Mammary epithelial cell (primary cell): ENCODE measurements at regions of chrX and their contacts with region 1.

Region 1: DNA sequence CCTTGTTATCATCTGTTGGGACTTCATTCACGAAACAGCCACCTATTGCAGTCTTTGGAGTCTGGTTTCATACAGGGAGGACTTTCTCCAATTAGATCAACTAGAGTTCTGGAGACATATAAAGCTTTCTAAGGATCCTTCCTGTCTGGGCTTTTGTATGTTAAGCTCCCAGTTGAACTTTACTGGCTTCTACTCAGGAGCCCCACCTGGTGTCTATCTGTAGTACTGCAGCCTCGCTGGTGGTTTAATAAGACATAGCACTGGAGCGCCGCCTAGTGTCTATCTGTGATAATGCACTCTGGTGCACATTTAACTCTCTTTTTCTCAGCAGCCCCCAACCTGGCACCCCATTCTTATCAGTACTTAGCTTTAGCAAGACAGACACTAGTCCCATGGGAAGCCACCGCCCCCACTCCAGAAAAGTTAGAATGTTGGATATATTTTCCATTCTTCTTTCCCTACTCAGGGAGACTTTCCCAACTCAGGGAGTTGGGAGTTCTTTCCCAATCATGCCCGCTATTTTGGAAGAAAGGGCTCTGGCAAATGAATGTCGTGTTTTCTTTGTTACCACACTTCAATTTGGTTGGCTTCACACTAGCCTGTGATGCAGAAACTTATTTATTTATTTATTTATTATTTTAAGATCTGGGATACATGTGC is 36.9 kb upstream of the SYTL4 start:
- DNase-seq: peak; percentile 52
- H3K4me3 ChIP-seq: no peak overlapping the region
- H3K27ac ChIP-seq: no peak overlapping the region
- H3K4me1 ChIP-seq: no peaks in the 10 kb centered on the region
- H3K27me3 ChIP-seq: no peaks in the 10 kb centered on the region
- CTCF ChIP-seq: peak; percentile 100

Region 2: DNA sequence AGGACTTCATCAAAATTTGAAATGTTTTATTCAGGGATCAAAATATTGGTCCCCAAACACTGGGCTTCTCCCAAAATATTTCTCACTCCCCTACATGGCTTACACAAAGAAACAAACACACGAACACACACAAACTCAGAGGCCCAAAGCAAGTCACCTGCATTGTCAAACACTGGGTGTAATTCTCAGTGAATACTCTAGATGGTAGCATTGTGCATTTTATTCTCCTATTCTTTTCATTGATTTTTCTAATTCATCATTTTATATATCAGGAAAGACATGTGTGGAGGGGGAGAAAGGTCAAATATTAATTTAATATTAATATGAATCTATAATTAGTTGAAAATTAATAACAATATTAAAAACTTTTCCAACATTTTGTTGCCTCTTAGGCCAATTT is 256.3 kb before region 1 on chrX:
- CTCF ChIA-PET with region 1: no interaction called
- dilution Hi-C with region 1: no loop called
- in situ Hi-C with region 1: loop called in 1 of 2 experiments (anchors 25 kb)
- intact Hi-C with region 1: loop called (anchors 2 kb)
- DNase-seq: peak; percentile 2
- H3K4me3 ChIP-seq: no peak overlapping the region
- H3K27ac ChIP-seq: no peak overlapping the region
- H3K4me1 ChIP-seq: no peaks in the 10 kb centered on the region
- H3K27me3 ChIP-seq: no peaks in the 10 kb centered on the region
- CTCF ChIP-seq: peak; percentile 62 to 66

Region 3: GRCh38 chrX:100674705-100675104 is 94.1 kb before region 1 on chrX:
- CTCF ChIA-PET with region 1: interaction called, 20 read pairs
- dilution Hi-C with region 1: no loop called
- in situ Hi-C with region 1: no loop called
- intact Hi-C with region 1: loop called (anchors 1 kb)
- DNase-seq: no peak
- H3K4me3 ChIP-seq: no peak overlapping the region
- H3K27ac ChIP-seq: no peak overlapping the region
- H3K4me1 ChIP-seq: no peaks in the 10 kb centered on the region
- H3K27me3 ChIP-seq: no peaks in the 10 kb centered on the region
- CTCF ChIP-seq: no peak

Region 4: DNA sequence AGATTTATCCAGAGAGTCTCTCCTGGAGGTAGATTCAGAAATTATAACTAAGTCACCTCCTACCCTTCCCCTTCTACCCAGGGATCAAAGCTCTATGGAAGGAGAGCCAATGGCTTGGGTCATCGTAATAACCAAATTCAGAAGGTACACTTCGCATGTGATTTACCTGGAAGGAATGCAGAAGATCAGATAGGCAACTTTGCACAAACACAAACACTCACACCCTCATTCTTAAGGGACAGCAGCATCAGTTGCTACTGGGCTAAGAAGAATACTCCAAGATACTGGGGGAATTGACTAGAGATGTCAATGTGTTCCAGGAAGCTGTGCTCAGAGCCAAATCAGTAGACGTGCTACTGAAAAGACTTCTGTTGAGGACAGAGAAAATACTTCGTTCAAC is 78.2 kb before region 1 on chrX:
- CTCF ChIA-PET with region 1: interaction called, 22 read pairs
- dilution Hi-C with region 1: no loop called
- in situ Hi-C with region 1: loop called (anchors 5 kb)
- intact Hi-C with region 1: loop called (anchors 1 kb)
- DNase-seq: no peak
- H3K4me3 ChIP-seq: no peak overlapping the region
- H3K27ac ChIP-seq: no peak overlapping the region
- H3K4me1 ChIP-seq: no peaks in the 10 kb centered on the region
- H3K27me3 ChIP-seq: peaks cover 2% of the 10 kb centered on the region
- CTCF ChIP-seq: no peak